ENCODE measurements at regions of chr5 and their contacts with region 1.

Region 1: DNA sequence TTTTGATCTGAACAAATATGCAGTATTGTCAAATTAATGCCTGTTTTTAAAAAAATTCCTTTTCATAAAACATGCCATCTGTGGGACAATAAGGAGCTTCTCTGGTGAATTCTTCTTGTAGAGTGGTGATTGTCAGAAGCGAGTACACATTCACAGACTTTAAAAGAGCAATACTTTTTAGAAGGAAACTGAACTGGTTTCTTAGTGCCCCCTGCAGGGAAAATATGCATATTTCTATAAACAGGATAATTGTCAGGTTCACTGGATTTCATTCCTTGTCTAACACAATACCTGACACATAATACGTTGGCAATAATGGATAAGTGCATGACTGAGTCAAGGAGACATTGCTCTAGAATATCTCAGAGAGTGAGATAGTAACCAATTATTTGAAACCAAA is 133.7 kb downstream of the KIF4B start:
- DNase-seq: peak; percentile 40
- H3K4me3 ChIP-seq: no peak overlapping the region
- H3K27ac ChIP-seq: no peak overlapping the region
- H3K4me1 ChIP-seq: peaks cover 6% of the 10 kb centered on the region
- H3K27me3 ChIP-seq: no peaks in the 10 kb centered on the region
- CTCF ChIP-seq: peak; percentile 40; the same call in 1 of the 2 replicates

Region 2: DNA sequence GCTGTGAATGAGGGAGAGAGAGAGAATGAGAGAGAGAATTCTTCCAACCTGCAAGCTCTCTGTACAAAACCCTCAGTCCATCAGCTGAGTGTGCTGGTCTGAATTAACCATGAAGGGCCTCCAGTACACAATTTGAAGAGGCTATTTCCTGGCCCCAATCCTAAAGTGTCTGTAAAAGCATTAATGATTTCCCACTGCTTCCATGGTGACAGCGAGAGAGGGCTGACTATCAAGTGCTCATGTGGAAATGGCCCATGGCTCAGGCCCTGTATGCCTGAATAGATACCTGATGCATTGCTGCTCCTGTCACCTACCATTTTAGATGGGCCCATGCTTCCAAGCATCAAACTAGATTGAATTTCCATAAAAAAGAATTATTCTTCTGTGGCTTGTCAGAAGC is 458.7 kb after region 1 on chr5:
- CTCF ChIA-PET with region 1: no interaction called
- POLR2A ChIA-PET with region 1: no interaction called
- intact Hi-C with region 1: loop called (anchors 10 kb)
- DNase-seq: no peak
- H3K4me3 ChIP-seq: no peak overlapping the region
- H3K27ac ChIP-seq: no peak overlapping the region
- H3K4me1 ChIP-seq: no peaks in the 10 kb centered on the region
- H3K27me3 ChIP-seq: no peaks in the 10 kb centered on the region
- CTCF ChIP-seq: no peak

Measured in A673 (cell line).